HEK293T (cell line): ENCODE measurements at regions of chr1 and their contacts with region 1.

Region 1: DNA sequence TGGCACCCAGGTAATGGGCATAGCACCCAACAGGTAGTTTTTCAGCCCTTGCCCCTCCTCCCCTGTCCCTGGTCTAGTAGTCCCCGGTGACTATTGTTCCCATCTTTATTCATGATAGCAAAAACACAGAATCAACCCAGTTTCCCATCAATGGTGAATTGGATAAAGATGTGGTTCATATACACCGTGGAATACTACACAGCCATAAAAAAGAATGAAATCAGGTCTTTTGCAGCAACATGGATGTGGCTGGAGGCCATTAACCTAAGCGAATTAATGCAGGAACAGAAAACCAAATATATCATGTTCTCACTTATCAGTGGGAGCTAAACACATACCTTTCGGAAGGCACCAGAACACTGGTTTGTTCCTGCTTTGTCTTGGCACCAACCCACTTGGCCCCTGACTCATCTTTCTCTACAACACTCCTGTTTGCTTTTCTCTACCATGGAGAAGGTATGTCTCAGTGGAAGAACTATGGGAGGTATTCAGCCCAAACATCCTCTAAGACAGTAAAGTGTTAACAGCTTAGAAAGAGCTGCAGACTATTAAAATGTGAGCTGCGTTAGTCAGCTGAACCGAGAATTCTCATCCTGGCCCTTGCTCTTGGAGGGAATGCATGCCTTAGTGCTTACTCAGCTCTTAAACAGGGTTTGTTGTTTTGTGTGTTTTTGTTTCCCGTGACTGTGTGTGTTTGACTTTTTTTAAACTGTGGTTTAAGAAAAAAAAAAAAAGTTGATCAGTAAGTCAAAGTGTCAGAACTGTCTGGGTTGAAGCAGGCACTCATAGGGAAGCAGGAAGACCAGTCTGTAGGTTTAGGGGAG is 203.0 kb downstream of the TOMM20 start:
- DNase-seq: no peak

Region 2: DNA sequence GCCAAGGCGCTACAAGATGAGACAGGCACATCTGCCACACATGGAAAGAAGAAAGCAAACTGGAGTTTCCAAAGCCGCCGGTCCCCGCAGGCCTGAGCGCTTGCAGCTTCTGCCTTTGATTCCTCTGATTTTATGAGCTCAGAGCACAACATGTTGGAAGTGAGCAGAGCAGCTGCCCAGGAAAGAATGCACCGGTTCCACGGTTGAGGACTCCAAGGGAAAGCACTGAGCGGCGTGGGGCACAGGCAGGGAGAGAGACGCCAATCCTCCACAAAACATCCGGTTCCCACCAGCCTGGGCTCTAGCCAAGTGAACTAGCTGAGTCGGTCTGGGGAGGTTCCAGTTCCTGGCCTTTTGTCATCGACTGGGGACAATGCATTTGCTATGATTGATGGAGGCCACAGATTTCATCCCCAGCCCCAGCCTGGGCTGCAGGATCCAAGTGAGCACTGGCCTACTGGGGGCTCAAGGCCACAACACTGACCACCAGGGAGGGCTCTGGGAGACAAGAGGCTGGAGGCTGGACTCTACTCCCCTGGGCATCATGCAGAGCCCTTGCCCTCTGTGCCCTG is 62.6 kb before region 1 on chr1:
- CTCF ChIA-PET with region 1: interaction called, 12 read pairs
- POLR2A ChIA-PET with region 1: no interaction called
- DNase-seq: no peak

Region 3: DNA sequence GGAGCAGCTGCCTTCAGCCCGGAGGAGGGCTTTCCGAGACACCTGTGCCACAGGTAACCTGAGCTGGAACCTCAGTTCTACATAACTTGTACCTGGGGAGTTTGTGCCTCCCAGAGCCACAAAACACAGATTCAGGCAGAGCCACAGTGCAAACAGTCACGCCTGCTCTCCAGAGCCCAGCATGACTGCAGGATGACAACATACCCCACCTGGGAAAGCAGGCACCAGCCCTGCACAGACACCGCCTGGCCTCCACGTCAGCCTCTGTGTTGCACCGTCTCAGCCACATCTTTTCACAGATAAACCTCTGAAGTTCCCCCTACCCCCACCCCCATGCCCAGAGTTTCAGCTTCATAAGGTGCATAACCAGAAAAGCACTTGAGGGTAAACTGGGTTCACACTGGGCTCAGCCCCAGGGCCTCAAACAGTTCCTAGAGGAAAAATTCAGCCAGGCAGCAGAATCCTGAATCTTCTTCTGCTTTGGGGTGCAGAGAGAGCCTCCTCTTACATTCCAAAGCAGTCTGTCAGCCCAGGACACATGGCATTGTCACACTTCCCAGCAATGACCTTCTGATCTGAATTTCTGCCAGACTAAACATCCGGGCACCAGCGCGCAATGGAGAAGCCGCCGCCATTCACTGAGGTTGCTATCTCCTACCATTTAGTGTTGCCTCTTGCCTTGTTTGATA is 26.5 kb before region 1 on chr1:
- CTCF ChIA-PET with region 1: no interaction called
- POLR2A ChIA-PET with region 1: no interaction called
- DNase-seq: no peak